AG04449 (cell line): ENCODE measurements at regions of chr17 and their contacts with region 1.

Region 1: GRCh38 chr17:16568541-16569357 is at the start of gene ZNF287:
- DNase-seq: peak; percentile 33
- H3K4me3 ChIP-seq: peak within 1 kb of the TSS; percentile 86
- CTCF ChIP-seq: no peak

Region 2: DNA sequence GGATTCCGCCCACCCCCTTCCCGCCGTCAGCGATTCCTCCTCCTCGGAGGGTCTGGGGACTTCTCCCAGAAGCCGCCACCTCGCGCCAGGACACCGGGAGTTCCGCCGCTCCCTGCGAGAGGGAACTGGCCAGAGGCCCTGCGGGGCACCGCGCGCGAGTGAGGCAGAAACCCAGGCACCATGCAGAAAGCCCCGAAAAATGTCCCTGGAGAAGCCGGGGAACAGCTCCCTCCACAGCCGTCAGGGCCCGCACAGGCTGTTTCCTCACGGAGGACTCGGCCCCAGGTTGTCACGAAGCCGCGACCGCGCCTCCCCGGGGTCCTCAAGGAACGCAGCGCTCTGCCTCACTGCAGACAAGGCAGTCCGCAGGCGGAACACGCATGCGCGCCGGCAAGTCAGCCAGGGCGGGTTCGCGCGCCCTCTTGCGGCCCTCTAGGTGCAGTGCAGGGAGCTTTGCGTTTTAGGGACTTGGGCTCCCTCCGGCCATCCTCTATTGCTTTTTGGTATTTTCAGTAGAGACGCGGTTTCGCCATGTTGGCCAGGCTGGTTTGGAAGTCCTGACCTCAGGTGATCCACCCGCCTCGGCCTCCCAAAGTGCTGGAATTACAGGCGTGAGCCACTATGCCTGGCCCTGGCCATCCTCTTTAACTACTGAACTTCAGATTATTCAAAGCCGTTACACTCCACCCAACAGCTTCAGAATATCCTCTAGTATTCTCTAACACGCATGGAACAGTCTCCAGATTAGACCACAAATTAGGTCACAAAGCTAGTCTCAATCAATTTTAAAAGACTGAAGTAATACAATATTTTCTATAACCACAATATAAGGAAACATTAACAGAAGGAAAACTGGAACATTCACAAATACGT is 20.6 kb after region 1 on chr17:
- CTCF ChIA-PET with region 1: interaction called, 23 read pairs
- POLR2A ChIA-PET with region 1: interaction called, 3 read pairs
- DNase-seq: peak; percentile 4
- H3K4me3 ChIP-seq: peak overlapping the region; percentile 69
- CTCF ChIP-seq: peak; percentile 99